Naive thymus-derived CD4-positive, alpha-beta T cell (primary cell): ENCODE measurements at regions of chr13 and their contacts with region 1.

Region 1: GRCh38 chr13:28258417-28258816 is 120.1 kb downstream of the PAN3 start:
- DNase-seq: no peak
- ATAC-seq: no peak
- H3K4me3 ChIP-seq: no peak overlapping the region
- H3K4me3 Mint-ChIP-seq: no peak overlapping the region
- H3K27ac ChIP-seq: no peak overlapping the region
- H3K27ac Mint-ChIP-seq: peak overlapping the region in 1 of 9 donors; percentile 51
- H3K4me1 ChIP-seq: no peaks in the 10 kb centered on the region
- H3K4me1 Mint-ChIP-seq: peaks cover 7 to 33% (median 13%) of the 10 kb centered on the region in 7 donors
- H3K27me3 ChIP-seq: no peaks in the 10 kb centered on the region
- H3K27me3 Mint-ChIP-seq: no peaks in the 10 kb centered on the region

Region 2: GRCh38 chr13:28239374-28239773 is 19.0 kb before region 1 on chr13:
- CTCF ChIA-PET with region 1: no interaction called
- POLR2A ChIA-PET with region 1: no interaction called
- intact Hi-C with region 1: loop called in 1 of 2 experiments (anchors 2 kb)
- DNase-seq: no peak
- ATAC-seq: no peak
- H3K4me3 ChIP-seq: no peak overlapping the region
- H3K4me3 Mint-ChIP-seq: no peak overlapping the region
- H3K27ac ChIP-seq: no peak overlapping the region
- H3K27ac Mint-ChIP-seq: peak overlapping the region in 4 of 9 donors; percentile 11 to 69 (median 18)
- H3K4me1 ChIP-seq: no peaks in the 10 kb centered on the region
- H3K4me1 Mint-ChIP-seq: peaks cover 0 to 34% (median 16%) of the 10 kb centered on the region in 7 donors
- H3K27me3 ChIP-seq: no peaks in the 10 kb centered on the region
- H3K27me3 Mint-ChIP-seq: no peaks in the 10 kb centered on the region

Region 3: DNA sequence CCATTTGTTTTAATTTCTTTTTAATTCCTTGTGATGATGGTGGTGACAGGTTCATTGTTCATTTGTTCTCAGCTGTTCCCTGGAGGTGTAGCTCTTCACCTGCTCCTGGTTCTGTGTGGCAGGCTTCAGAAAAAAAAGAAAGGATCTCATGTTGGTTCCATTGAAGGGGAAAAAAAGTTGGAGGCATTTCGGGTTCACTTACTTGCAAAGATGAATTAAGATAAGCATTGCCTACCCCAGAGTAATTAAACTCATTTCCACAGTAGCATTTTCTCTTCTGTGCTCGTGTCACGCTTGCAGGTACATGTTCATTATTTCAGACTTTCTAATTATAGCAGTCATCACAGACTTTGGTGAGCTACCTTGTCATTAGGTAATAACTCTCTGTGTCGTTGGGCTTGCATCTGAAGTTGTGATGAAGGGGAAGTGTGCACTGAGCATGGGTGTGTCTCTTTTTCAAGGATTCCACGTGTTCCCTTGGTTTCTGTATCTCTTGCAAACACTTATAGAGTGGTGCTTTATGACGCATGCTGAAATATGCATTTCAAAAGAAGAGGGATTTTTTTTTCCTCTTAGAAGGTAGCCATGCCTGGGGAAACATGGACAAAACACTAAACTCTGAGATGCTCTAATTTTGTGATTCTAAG is 630.8 kb after region 1 on chr13:
- CTCF ChIA-PET with region 1: no interaction called
- POLR2A ChIA-PET with region 1: no interaction called
- intact Hi-C with region 1: no loop called
- DNase-seq: no peak
- ATAC-seq: no peak
- H3K4me3 ChIP-seq: no peak overlapping the region
- H3K4me3 Mint-ChIP-seq: no peak overlapping the region
- H3K27ac ChIP-seq: no peak overlapping the region
- H3K27ac Mint-ChIP-seq: no peak overlapping the region
- H3K4me1 ChIP-seq: no peaks in the 10 kb centered on the region
- H3K4me1 Mint-ChIP-seq: no peaks in the 10 kb centered on the region
- H3K27me3 ChIP-seq: no peaks in the 10 kb centered on the region
- H3K27me3 Mint-ChIP-seq: peaks cover 0 to 23% (median 15%) of the 10 kb centered on the region in 5 donors